AG04450 (cell line): ENCODE measurements at regions of chr2 and their contacts with region 1.

Region 1: DNA sequence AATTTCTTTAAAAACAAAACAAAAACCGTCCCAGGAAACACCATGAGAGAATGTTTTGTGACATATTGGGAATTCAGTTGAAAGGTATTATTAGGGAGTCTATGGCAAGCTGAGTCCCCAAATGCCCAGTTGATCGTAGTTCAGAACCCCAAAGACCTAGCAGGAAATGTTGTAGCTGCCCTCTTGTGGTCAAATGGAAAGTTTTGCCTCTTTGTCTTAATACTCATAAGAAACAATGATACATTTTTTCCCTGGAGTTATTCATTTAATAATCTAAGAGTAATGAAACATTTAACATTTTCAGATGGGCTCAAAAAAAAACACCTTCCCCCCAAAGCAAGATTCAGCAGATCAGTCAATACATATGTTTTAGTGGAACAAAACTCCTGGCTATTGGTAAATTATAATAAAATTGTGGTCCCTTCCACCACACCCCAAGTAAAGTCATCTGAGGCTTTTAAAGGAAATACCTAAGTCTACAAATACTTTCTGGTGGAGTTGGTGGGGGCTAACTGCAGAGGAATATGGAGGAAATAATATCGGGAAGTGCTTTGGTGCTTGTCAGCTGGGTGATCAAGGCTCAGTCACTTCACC is 37.8 kb upstream of the EFEMP1 start:
- DNase-seq: peak; percentile 21
- H3K4me3 ChIP-seq: no peak overlapping the region
- H3K27ac ChIP-seq: no peak overlapping the region
- H3K27me3 ChIP-seq: no peaks in the 10 kb centered on the region
- CTCF ChIP-seq: peak; percentile 73

Region 2: DNA sequence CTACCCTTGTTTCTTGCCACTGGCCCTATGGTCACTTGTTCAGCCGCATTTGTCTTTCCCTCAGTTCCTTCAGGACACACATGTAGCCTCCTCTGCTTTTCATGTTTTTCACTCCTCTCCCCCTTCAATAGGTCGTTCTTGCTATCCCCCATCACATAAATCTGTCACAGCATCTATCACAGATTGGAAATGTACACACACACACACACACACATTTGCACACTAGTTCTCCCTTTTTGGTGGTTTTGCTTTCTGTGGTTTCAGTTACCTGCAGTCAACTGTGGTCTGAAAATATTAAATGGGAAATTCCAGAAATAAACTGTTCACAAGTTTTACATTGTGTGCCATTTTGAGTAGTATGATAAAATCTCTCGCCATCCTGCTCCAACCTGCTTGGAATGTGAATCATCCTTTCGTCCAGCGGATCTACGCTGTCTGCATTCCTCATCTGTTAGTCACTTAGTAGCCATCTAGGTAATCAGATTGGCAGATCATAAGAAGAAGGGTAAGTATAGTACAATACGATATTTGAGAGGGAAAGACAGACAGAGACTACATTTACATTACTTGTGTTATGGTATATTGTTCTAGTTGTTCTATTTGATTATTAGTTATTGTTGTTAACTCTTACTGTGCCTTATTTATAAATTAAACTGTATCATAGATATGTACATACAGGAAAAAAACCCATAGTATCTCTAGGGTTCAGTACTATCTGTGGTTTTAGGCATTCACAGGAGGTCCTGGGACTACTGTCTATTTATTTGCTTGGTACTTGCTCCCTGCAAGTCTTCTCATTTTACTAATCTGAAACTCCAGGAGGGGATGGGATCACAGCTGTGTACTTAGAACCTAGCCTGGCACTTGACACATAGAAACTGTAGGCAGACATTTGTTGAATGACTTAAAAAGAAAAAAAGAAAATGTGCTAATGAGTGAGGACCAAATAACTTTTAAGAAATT is 181.7 kb before region 1 on chr2:
- CTCF ChIA-PET with region 1: interaction called, 10 read pairs
- POLR2A ChIA-PET with region 1: no interaction called
- DNase-seq: peak; percentile 55
- H3K4me3 ChIP-seq: no peak overlapping the region
- H3K27ac ChIP-seq: no peak overlapping the region
- H3K27me3 ChIP-seq: no peaks in the 10 kb centered on the region
- CTCF ChIP-seq: no peak

Region 3: GRCh38 chr2:55827467-55828254 is 133.8 kb before region 1 on chr2:
- CTCF ChIA-PET with region 1: no interaction called
- POLR2A ChIA-PET with region 1: no interaction called
- DNase-seq: no peak
- H3K4me3 ChIP-seq: no peak overlapping the region
- H3K27ac ChIP-seq: no peak overlapping the region
- H3K27me3 ChIP-seq: no peaks in the 10 kb centered on the region
- CTCF ChIP-seq: no peak

Region 4: DNA sequence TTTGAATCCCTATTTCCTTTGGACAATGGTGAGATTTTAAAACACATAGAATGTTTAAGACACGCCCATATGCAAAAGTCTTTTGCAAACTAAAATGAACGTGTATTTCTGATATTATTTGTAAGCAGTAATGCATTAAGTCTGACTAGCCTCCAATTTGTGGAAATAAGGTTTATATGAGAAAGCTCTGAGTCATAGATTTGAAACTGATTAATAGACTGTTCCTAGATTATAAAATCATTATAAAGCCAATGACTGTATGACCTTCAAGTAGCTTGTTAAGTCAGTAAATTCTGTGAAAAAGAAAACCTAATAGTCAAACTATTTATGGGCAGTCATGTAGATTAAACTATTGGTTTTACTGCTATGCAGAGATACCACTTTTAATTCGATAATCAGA is 25.1 kb before region 1 on chr2:
- CTCF ChIA-PET with region 1: interaction called, 15 read pairs
- POLR2A ChIA-PET with region 1: no interaction called
- DNase-seq: no peak
- H3K4me3 ChIP-seq: no peak overlapping the region
- H3K27ac ChIP-seq: no peak overlapping the region
- H3K27me3 ChIP-seq: no peaks in the 10 kb centered on the region
- CTCF ChIP-seq: no peak

Region 5: DNA sequence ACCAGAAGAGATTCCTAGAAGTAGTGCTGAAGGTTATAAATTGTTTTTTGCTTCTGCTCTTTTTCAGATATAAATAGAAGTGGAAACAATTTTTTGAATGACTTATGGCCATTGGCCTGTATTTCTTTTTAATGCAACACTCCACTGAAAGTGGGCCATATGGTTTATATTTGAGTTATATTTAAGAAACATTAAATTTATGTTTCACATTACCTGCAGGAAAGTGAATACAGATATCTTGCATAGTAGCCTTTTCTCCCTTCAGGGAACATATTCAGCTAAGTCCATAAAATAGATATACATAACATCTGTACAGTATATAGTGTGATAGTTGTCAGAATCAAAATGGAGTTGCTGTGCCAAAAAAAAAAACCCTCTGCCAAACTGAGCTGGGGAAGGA is 15.3 kb after region 1 on chr2:
- CTCF ChIA-PET with region 1: interaction called, 12 read pairs
- POLR2A ChIA-PET with region 1: no interaction called
- DNase-seq: no peak
- H3K4me3 ChIP-seq: no peak overlapping the region
- H3K27ac ChIP-seq: no peak overlapping the region
- H3K27me3 ChIP-seq: no peaks in the 10 kb centered on the region
- CTCF ChIP-seq: no peak

Region 6: DNA sequence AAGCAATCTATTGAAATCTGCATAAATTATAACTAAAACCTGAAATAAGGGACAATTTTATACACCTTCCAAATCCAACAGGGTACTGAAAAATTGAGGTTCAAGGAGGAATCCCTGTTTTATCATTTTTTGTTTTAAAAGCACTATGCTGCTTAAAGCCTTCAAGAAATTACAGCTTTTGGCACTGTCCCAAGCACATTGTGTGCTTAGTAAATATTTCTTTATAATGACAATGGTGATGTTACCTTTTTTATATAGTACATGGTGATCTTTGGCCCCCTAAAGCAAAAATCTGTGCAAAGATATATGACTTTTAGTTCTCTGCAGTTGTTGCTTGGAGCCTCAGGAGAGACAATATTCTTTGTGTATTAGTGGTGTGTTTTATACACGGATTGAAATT is 33.8 kb after region 1 on chr2:
- CTCF ChIA-PET with region 1: interaction called, 15 read pairs
- POLR2A ChIA-PET with region 1: no interaction called
- DNase-seq: no peak
- H3K4me3 ChIP-seq: no peak overlapping the region
- H3K27ac ChIP-seq: no peak overlapping the region
- H3K27me3 ChIP-seq: no peaks in the 10 kb centered on the region
- CTCF ChIP-seq: no peak